ENCODE measurements at regions of chr9 and their contacts with region 1.

Region 1: GRCh38 chr9:124940693-124941453 is at the start of gene GOLGA1:
- DNase-seq: peak; percentile 87 to 98 (median 91)

Region 2: DNA sequence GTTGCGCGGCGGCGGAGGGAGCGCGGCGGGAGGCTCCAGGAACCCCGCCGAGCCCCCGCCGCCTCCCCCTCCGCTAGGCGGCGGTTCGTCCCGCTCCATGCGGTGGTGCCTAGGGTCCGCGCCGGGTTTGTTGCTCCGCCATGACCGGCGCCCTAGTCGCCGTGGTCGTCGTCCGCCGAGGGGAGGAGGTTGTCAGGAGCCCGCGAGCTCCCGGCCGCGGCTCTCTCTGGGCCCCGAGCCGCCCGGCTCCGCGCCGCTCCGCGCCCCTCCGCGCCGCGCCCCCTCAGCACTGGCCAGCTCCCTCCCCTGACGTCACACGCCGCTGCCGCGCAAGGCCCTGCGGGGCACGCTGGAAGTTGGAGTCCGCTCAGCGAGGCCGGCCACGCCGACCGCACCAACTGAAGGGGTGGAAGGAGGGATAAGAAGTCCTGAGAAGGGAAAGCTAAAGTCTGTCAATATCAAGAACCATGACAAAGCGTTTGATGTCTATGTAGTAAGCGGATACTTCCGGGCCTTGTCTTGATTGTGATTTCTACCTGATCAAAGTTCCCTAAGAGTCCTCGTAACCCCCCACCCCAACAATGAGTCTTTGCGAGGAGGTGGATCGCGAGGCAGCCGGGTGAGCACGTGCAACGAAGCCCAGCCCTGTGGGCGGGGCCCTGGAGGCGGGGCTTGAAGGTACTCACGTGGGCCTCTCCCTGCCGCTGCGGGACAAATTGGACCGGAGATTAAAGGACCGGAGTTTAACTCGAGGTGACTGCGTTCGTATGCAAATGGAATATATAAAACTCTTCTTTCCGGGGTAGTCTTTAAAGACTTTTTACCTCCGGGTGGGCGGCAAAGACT is 169.6 kb before region 1 on chr9 and contains the start of gene NR6A1:
- intact Hi-C with region 1: loop called (anchors 2 kb)
- DNase-seq: peak; percentile 91 to 99 (median 94)

Region 3: DNA sequence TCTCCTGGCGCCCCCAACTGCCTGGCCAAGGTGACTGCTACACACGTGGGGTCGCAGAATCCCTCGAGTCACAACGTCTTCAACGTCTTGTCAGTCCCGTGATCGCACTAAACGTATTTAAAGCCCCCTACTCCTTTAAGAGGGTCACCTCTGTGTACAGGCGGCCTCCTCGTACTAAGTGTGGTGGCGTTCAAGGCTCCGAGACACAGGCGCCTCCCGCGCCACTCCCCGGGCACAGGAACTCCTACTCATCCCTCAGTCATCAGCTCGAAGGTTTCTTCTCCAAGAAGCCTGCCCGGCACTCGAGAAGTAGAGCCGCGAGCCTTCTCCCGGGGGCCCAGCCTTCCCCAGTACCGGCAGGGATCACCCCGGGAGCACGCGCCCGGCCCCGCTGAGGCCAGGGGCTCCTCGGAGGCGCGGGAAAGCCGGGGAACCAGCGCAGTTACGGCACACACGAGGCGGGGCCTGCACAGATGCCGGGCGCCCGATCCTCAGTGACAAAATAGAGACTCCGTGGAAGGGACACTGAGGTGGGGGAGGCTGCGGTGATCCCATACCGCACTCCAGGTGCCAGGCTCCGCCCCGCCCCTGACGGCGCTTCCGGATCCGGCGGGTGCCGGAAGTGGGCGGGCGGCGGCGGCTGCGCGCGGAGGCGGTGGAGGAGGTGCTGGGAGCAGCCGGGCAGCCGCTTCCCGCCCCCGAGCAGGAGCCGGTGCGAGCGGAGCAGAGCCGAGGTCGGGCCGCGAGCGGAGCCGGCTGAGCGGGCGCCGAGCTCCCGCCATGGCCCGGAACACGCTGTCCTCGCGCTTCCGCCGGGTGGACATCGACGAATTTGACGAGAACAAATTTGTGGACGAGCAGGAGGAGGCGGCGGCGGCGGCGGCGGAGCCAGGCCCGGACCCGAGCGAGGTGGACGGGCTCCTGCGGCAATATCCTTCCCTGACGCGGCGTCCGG is 72.1 kb before region 1 on chr9:
- intact Hi-C with region 1: loop called (anchors 5 kb)
- DNase-seq: peak; percentile 76 to 98 (median 84)

Region 4: GRCh38 chr9:125143375-125144090 is 202.7 kb after region 1 on chr9 and contains the start of gene SCAI:
- intact Hi-C with region 1: loop called (anchors 2 kb)
- DNase-seq: peak; percentile 97 to 100 (median 100)

Region 5: GRCh38 chr9:125200210-125201047 is 259.6 kb after region 1 on chr9 and contains the start of gene RABEPK:
- intact Hi-C with region 1: loop called (anchors 5 kb)
- DNase-seq: peak; percentile 79 to 98 (median 90)